HCT116 (cell line): ENCODE measurements at regions of chr4 and their contacts with region 1.

Region 1: GRCh38 chr4:154559494-154560418 is 3.1 kb upstream of the FGB start:
- DNase-seq: peak; percentile 44
- ATAC-seq: peak; percentile 95
- H3K4me3 ChIP-seq: no peak overlapping the region
- H3K27ac ChIP-seq: no peak overlapping the region
- H3K4me1 ChIP-seq: no peaks in the 10 kb centered on the region
- H3K27me3 ChIP-seq: no peaks in the 10 kb centered on the region
- CTCF ChIP-seq: peak; percentile 53 to 76 (median 65)
- POLR2A ChIP-seq: no peak
- RAD21 ChIP-seq: peak; percentile 83

Region 2: GRCh38 chr4:154542271-154542879 is 17.4 kb before region 1 on chr4:
- CTCF ChIA-PET with region 1: no interaction called
- POLR2A ChIA-PET with region 1: no interaction called
- RAD21 ChIA-PET with region 1: no interaction called
- intact Hi-C with region 1: no loop called
- DNase-seq: no peak
- ATAC-seq: no peak
- H3K4me3 ChIP-seq: no peak overlapping the region
- H3K27ac ChIP-seq: no peak overlapping the region
- H3K4me1 ChIP-seq: no peaks in the 10 kb centered on the region
- H3K27me3 ChIP-seq: no peaks in the 10 kb centered on the region
- CTCF ChIP-seq: no peak
- POLR2A ChIP-seq: no peak
- RAD21 ChIP-seq: no peak

Region 3: DNA sequence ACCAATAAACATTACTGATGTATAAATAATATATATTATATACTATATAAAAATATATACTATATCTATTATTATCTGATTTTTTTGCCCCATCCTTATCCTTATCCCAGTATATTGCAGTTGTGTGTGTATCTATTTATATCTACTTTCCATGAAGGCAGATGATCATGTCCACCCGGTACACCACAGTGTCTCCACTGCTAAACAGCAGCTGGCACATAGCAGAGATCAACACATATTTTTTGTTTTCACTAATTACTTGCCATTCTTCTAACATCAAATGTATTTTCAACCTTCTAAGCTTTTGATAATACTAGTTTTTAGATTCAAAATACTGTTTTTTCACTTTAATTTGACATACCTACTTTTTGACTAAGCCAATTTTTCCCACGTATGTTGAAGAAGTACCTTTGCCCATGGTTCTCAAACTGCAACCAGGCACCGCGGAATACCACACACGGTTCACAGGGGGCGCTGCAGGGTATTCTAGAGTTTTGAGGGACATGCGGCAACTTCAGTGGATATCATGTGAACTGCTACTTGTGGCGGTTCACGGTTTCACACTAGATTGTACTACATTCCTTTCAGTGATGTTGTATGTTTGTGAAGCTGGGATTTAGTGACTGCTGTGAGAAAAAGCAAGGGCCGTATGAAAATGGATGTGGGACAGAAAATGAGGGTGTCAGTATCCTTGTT is 466.2 kb after region 1 on chr4:
- CTCF ChIA-PET with region 1: no interaction called
- POLR2A ChIA-PET with region 1: no interaction called
- RAD21 ChIA-PET with region 1: no interaction called
- intact Hi-C with region 1: loop called (anchors 5 kb)
- DNase-seq: peak; percentile 65
- ATAC-seq: peak; percentile 99
- H3K4me3 ChIP-seq: no peak overlapping the region
- H3K27ac ChIP-seq: no peak overlapping the region
- H3K4me1 ChIP-seq: no peaks in the 10 kb centered on the region
- H3K27me3 ChIP-seq: no peaks in the 10 kb centered on the region
- CTCF ChIP-seq: peak; percentile 75 to 93 (median 82)
- POLR2A ChIP-seq: no peak
- RAD21 ChIP-seq: peak; percentile 73